ENCODE measurements at regions of chrX and their contacts with region 1.

Region 1: GRCh38 chrX:5431823-5432222 is 796.8 kb downstream of the NLGN4X start:
- DNase-seq: no peak
- H3K4me3 ChIP-seq: no peak overlapping the region
- H3K27ac ChIP-seq: no peak overlapping the region
- H3K4me1 ChIP-seq: no peaks in the 10 kb centered on the region
- H3K27me3 ChIP-seq: no peaks in the 10 kb centered on the region
- CTCF ChIP-seq: no peak
- POLR2A ChIP-seq: no peak

Region 2: GRCh38 chrX:4674032-4674782 is 757.6 kb before region 1 on chrX:
- intact Hi-C with region 1: no loop called
- DNase-seq: no peak
- H3K4me3 ChIP-seq: no peak overlapping the region
- H3K27ac ChIP-seq: no peak overlapping the region
- H3K4me1 ChIP-seq: no peaks in the 10 kb centered on the region
- H3K27me3 ChIP-seq: no peaks in the 10 kb centered on the region
- CTCF ChIP-seq: no peak
- POLR2A ChIP-seq: no peak

Region 3: DNA sequence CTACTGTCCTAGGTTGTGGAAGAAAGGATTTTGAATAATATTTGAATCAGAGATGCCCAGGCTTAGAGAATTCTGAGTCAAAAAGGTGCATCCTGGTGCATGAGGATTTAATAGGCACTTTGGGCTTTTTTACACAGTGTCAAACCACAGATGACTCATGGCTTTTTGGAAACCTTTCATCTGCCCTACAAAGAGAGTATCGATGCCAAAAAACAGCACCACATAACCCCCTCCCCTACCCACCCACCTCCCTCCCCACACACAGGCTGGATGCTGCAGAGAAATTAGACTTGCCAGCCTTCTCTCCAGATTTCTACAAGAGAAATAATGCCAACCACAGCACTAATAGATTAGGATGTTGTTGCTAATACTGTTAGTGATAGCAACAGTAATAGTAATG is 17.5 kb after region 1 on chrX:
- intact Hi-C with region 1: loop called (anchors 1 kb)
- DNase-seq: no peak
- H3K4me3 ChIP-seq: no peak overlapping the region
- H3K27ac ChIP-seq: no peak overlapping the region
- H3K4me1 ChIP-seq: no peaks in the 10 kb centered on the region
- H3K27me3 ChIP-seq: no peaks in the 10 kb centered on the region
- CTCF ChIP-seq: no peak
- POLR2A ChIP-seq: no peak

Region 4: DNA sequence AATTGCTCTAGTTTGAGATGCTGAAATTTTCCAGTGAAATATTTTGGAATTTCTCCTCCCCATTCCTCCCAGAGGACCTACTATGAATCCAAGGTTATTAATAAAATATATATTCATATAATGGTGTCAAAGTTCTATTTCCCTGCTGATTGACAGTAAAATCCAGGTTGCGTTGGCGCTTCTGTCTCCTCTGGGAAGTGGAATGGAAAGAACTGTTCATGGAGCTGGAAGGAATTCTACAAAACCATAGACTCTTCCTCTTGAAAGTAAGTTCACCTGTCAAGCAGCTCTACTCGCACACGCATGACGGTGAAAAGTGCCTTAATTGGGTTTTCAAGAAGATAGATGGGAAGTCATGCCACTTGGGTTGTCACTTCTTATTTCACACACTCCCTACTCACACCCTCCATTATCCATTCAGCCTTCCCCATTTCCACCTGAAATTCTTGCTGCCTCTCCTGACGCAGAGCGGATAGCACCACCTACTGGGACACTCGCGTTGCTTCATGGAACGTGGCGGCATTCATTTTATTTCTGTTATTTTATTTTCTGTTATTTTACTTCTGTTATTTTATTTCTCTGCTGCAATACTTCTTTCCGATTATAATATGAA is 445.3 kb after region 1 on chrX:
- intact Hi-C with region 1: loop called (anchors 5 kb)
- DNase-seq: no peak
- H3K4me3 ChIP-seq: no peak overlapping the region
- H3K27ac ChIP-seq: no peak overlapping the region
- H3K4me1 ChIP-seq: no peaks in the 10 kb centered on the region
- H3K27me3 ChIP-seq: peaks cover 0 to 6% of the 10 kb centered on the region in 2 donors
- CTCF ChIP-seq: no peak
- POLR2A ChIP-seq: no peak

Measured in breast epithelium (tissue), 4 donors.